Panc1 (cell line): ENCODE measurements at regions of chr12 and their contacts with region 1.

Region 1: DNA sequence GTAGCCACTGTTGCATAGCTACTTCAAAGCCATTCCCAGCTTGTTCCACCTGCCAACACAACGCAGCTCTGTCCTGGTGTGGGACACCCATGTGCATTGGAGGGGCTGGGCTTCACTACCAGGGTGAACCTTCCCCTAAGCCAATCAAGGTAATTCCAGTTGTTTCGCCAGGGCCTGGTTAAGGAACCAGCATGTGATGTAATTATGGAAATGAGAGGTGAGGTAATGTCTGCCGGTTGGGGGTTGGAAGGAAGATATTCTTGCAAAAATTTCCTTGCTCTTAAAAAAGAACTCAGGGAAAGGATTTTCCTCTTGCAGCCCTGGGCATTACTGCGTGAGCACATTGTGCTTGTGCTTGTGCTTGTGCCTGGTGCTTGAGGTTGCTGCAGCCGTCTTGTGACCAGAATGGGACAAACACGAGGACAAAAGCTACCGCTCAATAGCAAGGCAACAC is 14.9 kb downstream of the TUBA1C start:
- DNase-seq: no peak
- ATAC-seq: no peak
- H3K4me3 ChIP-seq: no peak overlapping the region
- H3K27ac ChIP-seq: no peak overlapping the region
- H3K4me1 ChIP-seq: peaks cover 3% of the 10 kb centered on the region
- H3K27me3 ChIP-seq: no peaks in the 10 kb centered on the region
- CTCF ChIP-seq: no peak

Region 2: GRCh38 chr12:49515266-49515665 is 235.5 kb after region 1 on chr12:
- CTCF ChIA-PET with region 1: interaction called, 10 read pairs
- POLR2A ChIA-PET with region 1: no interaction called
- in situ Hi-C with region 1: no loop called
- intact Hi-C with region 1: no loop called
- DNase-seq: peak; percentile 17
- ATAC-seq: no peak
- H3K4me3 ChIP-seq: no peak overlapping the region
- H3K27ac ChIP-seq: no peak overlapping the region
- H3K4me1 ChIP-seq: no peaks in the 10 kb centered on the region
- H3K27me3 ChIP-seq: no peaks in the 10 kb centered on the region
- CTCF ChIP-seq: no peak